Activated CD4-positive, alpha-beta T cell treated with anti-CD3 and anti-CD28 coated beads for 36 hours (primary cell): ENCODE measurements at regions of chr3 and their contacts with region 1.

Region 1: DNA sequence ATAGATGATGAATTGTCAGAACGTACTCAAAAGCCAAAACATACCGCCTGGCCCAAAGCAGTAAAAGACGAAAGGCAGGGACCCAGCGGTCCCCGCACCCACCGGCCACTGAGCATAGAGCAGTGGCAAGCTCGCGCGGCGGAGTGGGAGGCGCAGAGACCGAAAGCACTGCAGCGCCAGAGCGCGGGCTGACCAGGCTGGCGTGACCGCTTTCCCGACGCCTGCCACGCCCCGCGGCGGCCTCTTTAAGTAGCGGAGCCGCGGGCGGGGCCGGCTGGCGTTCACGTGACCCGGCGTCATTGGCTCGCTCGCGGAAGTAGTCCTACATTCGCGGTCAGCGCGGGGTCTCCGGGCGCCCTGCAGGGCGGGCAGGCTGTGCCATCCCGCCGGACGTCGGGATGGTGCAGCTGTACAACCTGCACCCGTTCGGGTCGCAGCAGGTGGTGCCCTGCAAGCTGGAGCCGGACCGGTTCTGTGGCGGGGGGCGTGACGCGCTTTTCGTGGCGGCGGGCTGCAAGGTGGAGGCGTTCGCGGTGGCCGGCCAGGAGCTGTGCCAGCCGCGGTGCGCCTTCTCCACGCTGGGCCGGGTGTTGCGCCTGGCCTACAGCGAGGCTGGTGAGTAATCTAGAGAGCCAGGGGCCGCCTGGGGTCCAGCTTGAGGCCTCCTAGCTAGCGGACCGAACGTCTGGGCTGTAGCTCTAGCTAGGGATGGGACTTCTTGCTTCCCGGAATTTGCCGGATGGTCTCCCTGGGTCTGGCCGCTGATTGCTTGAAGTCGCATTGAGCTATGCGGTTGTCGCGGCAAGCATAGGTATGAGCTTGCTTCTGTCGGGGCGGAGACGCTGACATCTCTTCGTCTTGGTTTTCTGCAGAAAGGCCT is at the start of gene HPS3:
- DNase-seq: peak; percentile 90
- ATAC-seq: peak; percentile 91
- H3K4me3 Mint-ChIP-seq: peak within 1 kb of the TSS; percentile 90
- H3K27ac Mint-ChIP-seq: peak within 1 kb of the TSS; percentile 82
- H3K4me1 Mint-ChIP-seq: peaks cover 37% of the 10 kb centered on the region
- H3K27me3 Mint-ChIP-seq: peaks cover 8% of the 10 kb centered on the region
- total RNA-seq, gene HPS3: 18.0 to 20.2 TPM

Region 2: DNA sequence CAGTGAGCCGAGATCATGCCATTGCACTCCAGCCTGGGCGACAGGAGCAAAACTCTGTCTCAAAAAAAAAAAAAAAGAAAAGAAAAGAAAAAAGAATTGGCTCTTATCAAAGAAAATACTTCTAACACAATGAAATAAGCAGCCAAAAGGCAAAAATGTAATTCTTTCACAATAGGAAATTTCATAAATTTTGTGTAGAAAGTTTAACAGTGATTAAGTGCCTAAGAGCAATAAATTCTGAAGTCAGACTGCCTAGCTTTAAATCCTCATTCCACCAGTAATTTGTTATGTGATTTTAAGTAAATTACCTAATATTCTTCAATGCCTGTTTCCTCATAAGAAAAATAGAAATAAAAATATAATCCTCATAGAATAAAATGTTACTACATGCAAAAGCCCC is 67.8 kb before region 1 on chr3:
- CTCF ChIA-PET with region 1: no interaction called
- POLR2A ChIA-PET with region 1: no interaction called
- intact Hi-C with region 1: no loop called
- DNase-seq: no peak
- ATAC-seq: no peak
- H3K4me3 Mint-ChIP-seq: no peak overlapping the region
- H3K27ac Mint-ChIP-seq: no peak overlapping the region
- H3K4me1 Mint-ChIP-seq: no peaks in the 10 kb centered on the region
- H3K27me3 Mint-ChIP-seq: no peaks in the 10 kb centered on the region

Region 3: GRCh38 chr3:149086232-149086988 is 43.2 kb before region 1 on chr3 and contains the start of gene HLTF:
- CTCF ChIA-PET with region 1: no interaction called
- POLR2A ChIA-PET with region 1: no interaction called
- intact Hi-C with region 1: loop called (anchors 1 kb)
- DNase-seq: peak; percentile 93
- ATAC-seq: peak; percentile 100
- H3K4me3 Mint-ChIP-seq: peak within 1 kb of the TSS; percentile 92
- H3K27ac Mint-ChIP-seq: peak within 1 kb of the TSS; percentile 80
- H3K4me1 Mint-ChIP-seq: peaks cover 18% of the 10 kb centered on the region
- H3K27me3 Mint-ChIP-seq: no peaks in the 10 kb centered on the region
- total RNA-seq, gene HLTF: 19.0 to 20.5 TPM

Region 4: GRCh38 chr3:149936812-149937233 is 807.3 kb after region 1 on chr3:
- CTCF ChIA-PET with region 1: no interaction called
- POLR2A ChIA-PET with region 1: no interaction called
- intact Hi-C with region 1: no loop called
- DNase-seq: peak; percentile 59
- ATAC-seq: peak; percentile 55
- H3K4me3 Mint-ChIP-seq: no peak overlapping the region
- H3K27ac Mint-ChIP-seq: no peak overlapping the region
- H3K4me1 Mint-ChIP-seq: peaks cover 18% of the 10 kb centered on the region
- H3K27me3 Mint-ChIP-seq: no peaks in the 10 kb centered on the region